GM10248 (cell line): ENCODE measurements at regions of chr1 and their contacts with region 1.

Region 1: DNA sequence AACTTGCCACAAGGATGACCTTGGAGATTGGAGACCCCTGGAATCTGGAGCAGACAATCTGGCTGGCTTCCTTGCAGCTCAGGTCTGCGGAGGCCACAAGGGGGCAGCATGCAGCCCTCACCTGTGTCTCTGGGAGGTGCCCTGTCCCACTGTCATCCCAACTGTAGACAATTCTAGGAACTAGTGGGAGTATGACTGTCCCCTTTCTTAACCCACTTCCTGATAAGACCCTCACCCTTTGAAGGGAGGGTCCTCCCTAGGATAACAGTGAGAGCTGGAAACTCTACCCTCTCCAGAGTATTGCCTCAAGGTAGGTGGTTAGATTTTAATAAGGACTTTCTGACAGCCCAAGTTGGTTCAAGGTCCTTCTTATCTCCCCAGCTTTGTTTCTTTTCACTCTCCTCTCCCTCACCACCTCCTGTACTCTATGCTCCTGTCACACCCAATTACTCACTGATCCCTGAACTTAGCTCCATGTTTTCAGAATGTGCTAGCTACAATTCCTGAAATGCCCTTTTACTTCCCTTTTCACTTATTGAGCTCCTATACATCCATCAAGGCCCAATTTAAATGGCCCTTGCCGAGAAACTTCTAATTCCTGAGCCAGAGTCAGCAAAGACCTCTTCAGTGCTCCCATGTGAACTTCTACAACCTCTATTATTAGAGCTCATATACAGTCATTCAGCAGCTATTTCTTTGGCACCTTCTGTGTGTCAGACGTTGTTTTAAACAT is 9.2 kb upstream of the KCNQ4 start:
- DNase-seq: peak; percentile 68
- CTCF ChIP-seq: peak; percentile 84

Region 2: GRCh38 chr1:40722636-40723035 is 51.8 kb before region 1 on chr1:
- CTCF ChIA-PET with region 1: interaction called, 10 read pairs
- POLR2A ChIA-PET with region 1: no interaction called
- DNase-seq: no peak
- CTCF ChIP-seq: peak; percentile 22

Region 3: GRCh38 chr1:40748841-40749718 is 25.4 kb before region 1 on chr1:
- CTCF ChIA-PET with region 1: interaction called, 232 read pairs
- POLR2A ChIA-PET with region 1: no interaction called
- DNase-seq: no peak
- CTCF ChIP-seq: no peak

Region 4: DNA sequence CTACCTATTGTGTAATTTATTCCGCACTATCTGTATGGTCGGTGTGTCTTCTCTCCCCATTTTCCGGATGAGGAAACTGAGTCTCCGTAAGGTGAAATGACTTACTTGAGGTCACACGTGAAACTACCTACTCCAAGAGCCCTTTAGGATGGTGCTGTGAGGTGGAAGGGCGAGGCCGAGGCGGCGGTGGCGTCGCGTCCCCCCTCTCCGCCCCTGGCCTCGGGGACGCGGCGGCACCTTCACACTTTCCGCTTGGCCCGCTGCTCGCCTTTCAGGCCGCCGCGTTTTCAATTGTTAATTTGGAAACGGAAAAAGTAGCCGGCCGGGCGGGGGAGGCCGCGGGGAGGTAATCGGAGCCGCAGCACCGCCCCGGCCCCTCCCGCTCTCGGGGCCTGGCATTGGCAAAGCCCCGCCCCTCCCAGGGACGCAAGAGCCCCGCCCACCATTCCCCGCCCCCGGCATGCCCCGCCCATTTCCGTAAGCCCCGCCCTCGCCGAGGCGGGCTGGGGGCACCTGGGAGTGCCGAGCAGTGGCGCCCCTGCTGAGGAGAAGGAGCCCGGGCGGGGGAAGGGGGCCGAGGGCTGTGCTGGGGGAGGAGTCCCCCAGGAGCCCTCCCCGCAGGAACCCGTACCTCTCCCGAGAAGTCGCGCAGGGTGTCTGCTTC is 27.8 kb after region 1 on chr1:
- CTCF ChIA-PET with region 1: interaction called, 37 read pairs
- POLR2A ChIA-PET with region 1: no interaction called
- DNase-seq: peak; percentile 97
- CTCF ChIP-seq: no peak

Region 5: DNA sequence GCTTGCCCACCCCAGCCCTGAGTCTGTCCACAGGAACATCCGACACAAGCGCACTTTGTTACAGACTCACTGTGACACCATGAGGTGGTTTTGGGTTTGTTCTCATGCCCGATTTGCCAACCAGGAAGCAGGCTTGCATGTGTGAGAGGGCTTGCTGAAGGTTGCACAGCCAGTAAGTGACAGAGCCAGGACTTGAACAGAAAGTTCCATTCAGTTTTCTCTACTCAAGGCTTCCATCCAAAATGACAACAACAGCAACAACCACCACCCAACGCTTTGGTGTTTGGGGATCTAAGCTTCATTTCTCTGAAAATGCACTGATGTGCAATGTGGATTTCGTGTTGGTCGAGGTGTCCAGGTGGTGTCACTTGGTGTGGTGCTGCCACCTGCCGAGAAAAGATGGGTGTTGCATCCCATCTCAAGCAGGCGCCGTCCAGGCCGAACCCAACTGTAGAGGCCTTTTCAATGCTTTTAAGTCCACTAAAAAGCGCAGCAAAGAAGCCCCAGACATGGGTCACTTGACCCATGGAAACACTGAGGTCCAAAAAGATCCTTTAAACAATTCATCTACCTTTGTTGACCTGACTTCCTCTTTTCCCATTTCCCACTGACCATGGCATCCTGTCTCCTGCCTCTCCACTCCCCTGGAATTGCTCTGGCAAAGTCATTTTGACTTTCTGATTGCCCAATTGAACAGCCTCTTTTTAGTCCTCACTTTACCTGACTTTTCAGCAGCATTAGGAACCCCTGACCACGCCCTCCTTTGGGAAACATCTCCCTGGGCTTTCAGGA is 75.6 kb after region 1 on chr1:
- CTCF ChIA-PET with region 1: interaction called, 91 read pairs
- POLR2A ChIA-PET with region 1: no interaction called
- DNase-seq: peak; percentile 81
- CTCF ChIP-seq: peak; percentile 92

Region 6: GRCh38 chr1:40901886-40902852 is 127.7 kb after region 1 on chr1:
- CTCF ChIA-PET with region 1: no interaction called
- POLR2A ChIA-PET with region 1: no interaction called
- DNase-seq: no peak
- CTCF ChIP-seq: no peak